Activated B cell treated with CpG ODN at 0.5 μM for 24 hours (primary cell): ENCODE measurements at regions of chr18 and their contacts with region 1.

Region 1: GRCh38 chr18:36129300-36130038 is at the starts of genes ELP2 and SLC39A6:
- DNase-seq: peak; percentile 97
- ATAC-seq: peak; percentile 87
- H3K4me3 Mint-ChIP-seq: peak within 1 kb of the TSS; percentile 94
- H3K27ac Mint-ChIP-seq: peak within 1 kb of the TSS; percentile 92
- H3K4me1 Mint-ChIP-seq: peaks cover 57% of the 10 kb centered on the region
- H3K27me3 Mint-ChIP-seq: no peaks in the 10 kb centered on the region
- CTCF ChIP-seq: no peak
- total RNA-seq, gene ELP2: 105 and 124 TPM in 2 replicates
- total RNA-seq, gene SLC39A6: 17.6 and 18.6 TPM in 2 replicates

Region 2: DNA sequence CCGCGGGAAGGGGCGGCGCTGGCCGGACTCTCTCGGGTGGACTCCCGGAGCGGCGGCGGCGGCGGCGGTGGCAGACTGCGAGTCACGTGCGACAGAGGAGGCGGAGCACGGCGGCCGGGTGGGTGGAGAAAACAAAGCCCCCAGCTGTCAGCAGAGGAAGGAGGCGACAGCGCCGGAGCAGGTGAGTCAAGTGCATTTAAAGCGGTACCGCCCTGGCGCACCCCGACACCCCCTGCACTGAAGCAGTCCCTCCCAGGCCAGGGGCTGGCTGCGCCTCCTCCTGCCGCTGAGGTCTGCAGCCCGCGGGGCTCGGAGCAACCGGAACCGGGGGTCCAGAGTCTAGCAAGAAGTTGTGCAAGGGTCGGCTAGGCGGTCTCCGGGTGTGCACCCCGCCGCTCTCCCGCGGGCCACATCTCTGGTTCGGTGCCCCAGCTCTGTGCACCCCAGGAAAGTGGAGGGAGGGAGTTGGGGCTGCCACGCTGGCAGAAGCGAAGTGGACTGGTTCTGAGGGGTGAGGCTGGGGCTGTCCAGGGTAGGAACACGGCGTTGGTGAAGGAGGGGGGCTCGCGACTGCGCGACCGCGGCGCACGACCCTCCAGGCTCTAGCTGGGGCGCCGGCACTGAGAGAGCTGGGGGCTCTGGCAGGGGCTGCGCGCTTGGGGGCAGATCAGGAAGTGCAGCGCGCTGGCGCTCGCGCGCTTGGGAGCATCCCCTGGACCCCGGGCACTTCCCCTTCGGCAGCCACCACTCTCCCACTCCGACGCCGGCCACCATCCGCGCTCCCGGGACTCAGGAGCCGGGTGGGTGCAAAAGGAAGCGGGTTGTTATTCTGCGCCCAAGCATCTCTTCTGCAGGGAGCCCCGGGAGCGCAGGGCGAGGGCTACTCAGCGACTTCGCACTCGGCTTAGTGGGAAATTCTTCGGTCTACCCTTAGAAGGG is 1152.3 kb before region 1 on chr18:
- CTCF ChIA-PET with region 1: no interaction called
- POLR2A ChIA-PET with region 1: no interaction called
- intact Hi-C with region 1: loop called (anchors 5 kb)
- DNase-seq: peak; percentile 77
- ATAC-seq: peak; percentile 76
- H3K4me3 Mint-ChIP-seq: peak overlapping the region; percentile 89
- H3K27ac Mint-ChIP-seq: no peak overlapping the region
- H3K4me1 Mint-ChIP-seq: peaks cover 23% of the 10 kb centered on the region
- H3K27me3 Mint-ChIP-seq: peaks cover 18% of the 10 kb centered on the region
- CTCF ChIP-seq: no peak

Region 3: GRCh38 chr18:35267161-35267651 is 862.3 kb before region 1 on chr18:
- CTCF ChIA-PET with region 1: no interaction called
- POLR2A ChIA-PET with region 1: no interaction called
- intact Hi-C with region 1: loop called (anchors 1 kb)
- DNase-seq: peak; percentile 72
- ATAC-seq: peak; percentile 89
- H3K4me3 Mint-ChIP-seq: peak overlapping the region; percentile 94
- H3K27ac Mint-ChIP-seq: peak overlapping the region; percentile 93
- H3K4me1 Mint-ChIP-seq: peaks cover 26% of the 10 kb centered on the region
- H3K27me3 Mint-ChIP-seq: no peaks in the 10 kb centered on the region
- CTCF ChIP-seq: no peak

Region 4: GRCh38 chr18:35376742-35377695 is 752.5 kb before region 1 on chr18 and contains the start of gene ZNF396:
- CTCF ChIA-PET with region 1: no interaction called
- POLR2A ChIA-PET with region 1: no interaction called
- intact Hi-C with region 1: loop called (anchors 1 kb)
- DNase-seq: peak; percentile 68
- ATAC-seq: peak; percentile 72
- H3K4me3 Mint-ChIP-seq: peak within 1 kb of the TSS; percentile 89
- H3K27ac Mint-ChIP-seq: peak within 1 kb of the TSS; percentile 47
- H3K4me1 Mint-ChIP-seq: peaks cover 11% of the 10 kb centered on the region
- H3K27me3 Mint-ChIP-seq: no peaks in the 10 kb centered on the region
- CTCF ChIP-seq: no peak
- total RNA-seq, gene ZNF396: 1.5 and 2.2 TPM in 2 replicates

Region 5: GRCh38 chr18:35504996-35505395 is 624.5 kb before region 1 on chr18:
- CTCF ChIA-PET with region 1: no interaction called
- POLR2A ChIA-PET with region 1: no interaction called
- intact Hi-C with region 1: no loop called
- DNase-seq: no peak
- ATAC-seq: no peak
- H3K4me3 Mint-ChIP-seq: no peak overlapping the region
- H3K27ac Mint-ChIP-seq: no peak overlapping the region
- H3K4me1 Mint-ChIP-seq: peaks cover 10% of the 10 kb centered on the region
- H3K27me3 Mint-ChIP-seq: no peaks in the 10 kb centered on the region
- CTCF ChIP-seq: no peak

Region 6: DNA sequence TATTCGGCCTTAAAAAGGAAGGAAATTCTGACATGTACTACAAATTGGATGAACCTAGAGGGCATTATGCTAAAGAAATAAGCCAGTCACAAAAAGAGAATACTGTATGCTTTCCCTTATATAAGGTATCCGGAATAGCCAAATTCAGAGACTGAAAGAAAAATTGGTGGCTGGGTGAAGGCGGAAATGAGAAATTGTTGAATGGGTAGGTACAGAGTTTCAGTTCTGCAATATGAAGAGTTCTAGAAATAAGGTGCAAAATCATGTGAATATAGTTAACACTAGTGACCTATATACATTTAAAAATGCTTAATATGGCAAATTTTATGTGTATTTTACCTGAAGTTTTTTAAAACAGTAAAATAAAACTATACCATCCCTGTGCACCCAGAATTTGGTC is 113.8 kb before region 1 on chr18:
- CTCF ChIA-PET with region 1: interaction called, 6 read pairs
- POLR2A ChIA-PET with region 1: interaction called, 6 read pairs
- intact Hi-C with region 1: loop called (anchors 1 kb)
- DNase-seq: no peak
- ATAC-seq: peak; percentile 75
- H3K4me3 Mint-ChIP-seq: no peak overlapping the region
- H3K27ac Mint-ChIP-seq: peak overlapping the region; percentile 12
- H3K4me1 Mint-ChIP-seq: peaks cover 26% of the 10 kb centered on the region
- H3K27me3 Mint-ChIP-seq: no peaks in the 10 kb centered on the region
- CTCF ChIP-seq: no peak

Region 7: DNA sequence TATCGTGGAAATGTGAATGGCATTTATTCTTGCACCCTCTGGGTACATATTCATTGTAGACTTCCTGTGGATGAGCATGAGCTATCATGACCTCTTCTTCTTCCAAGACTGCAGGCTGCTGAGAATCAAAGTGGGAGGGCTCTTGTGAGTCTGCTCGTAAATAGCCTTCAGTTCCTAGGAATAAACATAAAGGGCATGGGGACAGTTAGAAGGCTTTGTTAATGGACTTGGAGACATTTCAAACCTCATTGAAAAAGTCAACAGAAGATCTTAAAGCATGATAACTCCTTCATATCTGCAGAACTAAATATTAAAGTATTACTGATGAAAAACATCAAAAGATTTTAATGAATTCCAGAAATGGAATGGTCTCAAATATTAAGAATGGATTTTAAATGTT is 15.2 kb before region 1 on chr18:
- CTCF ChIA-PET with region 1: no interaction called
- POLR2A ChIA-PET with region 1: no interaction called
- intact Hi-C with region 1: no loop called
- DNase-seq: no peak
- ATAC-seq: no peak
- H3K4me3 Mint-ChIP-seq: no peak overlapping the region
- H3K27ac Mint-ChIP-seq: no peak overlapping the region
- H3K4me1 Mint-ChIP-seq: no peaks in the 10 kb centered on the region
- H3K27me3 Mint-ChIP-seq: no peaks in the 10 kb centered on the region
- CTCF ChIP-seq: no peak

Region 8: DNA sequence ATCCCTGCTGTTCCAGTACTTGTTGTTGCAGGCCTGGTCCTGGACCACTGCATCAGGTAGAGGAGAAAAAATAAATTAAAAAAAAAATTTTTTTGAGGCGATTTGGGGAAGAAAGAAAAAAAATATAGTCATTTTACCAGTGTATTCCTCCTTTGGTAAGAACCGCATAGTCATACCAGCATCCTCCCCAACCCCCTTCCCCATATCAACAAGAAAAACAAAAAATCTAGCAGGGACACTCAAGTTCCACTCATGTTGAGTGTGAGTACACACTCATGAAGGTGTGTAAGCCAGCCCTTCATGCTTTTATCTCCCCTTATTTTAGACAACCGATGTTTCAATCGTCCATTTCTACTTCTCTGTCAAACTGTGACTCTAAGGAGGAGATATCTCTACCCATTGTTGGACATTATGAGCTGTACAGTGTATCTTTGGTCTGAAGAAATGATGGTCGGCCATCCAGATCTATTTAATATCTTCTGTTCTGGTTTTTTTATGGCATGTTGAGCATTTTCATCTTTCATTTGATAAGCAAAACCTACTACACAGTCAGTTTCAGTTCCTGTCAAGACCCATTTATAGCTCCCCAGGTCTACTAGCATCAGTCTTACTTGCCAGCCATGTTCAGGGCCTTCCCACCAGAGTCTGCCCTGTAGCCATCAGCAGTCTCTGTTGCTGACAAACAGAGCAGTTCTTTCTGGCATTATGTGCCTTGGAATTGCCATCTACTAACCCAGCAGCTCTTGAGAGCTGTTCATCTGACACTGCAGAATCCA is 20.2 kb after region 1 on chr18:
- CTCF ChIA-PET with region 1: no interaction called
- POLR2A ChIA-PET with region 1: interaction called, 29 read pairs
- intact Hi-C with region 1: loop called (anchors 1 kb)
- DNase-seq: no peak
- ATAC-seq: peak; percentile 98
- H3K4me3 Mint-ChIP-seq: peak overlapping the region; percentile 61
- H3K27ac Mint-ChIP-seq: peak overlapping the region; percentile 89
- H3K4me1 Mint-ChIP-seq: peaks cover 54% of the 10 kb centered on the region
- H3K27me3 Mint-ChIP-seq: no peaks in the 10 kb centered on the region
- CTCF ChIP-seq: no peak

Region 9: GRCh38 chr18:36179562-36180355 is 50.3 kb after region 1 on chr18:
- CTCF ChIA-PET with region 1: no interaction called
- POLR2A ChIA-PET with region 1: no interaction called
- intact Hi-C with region 1: no loop called
- DNase-seq: no peak
- ATAC-seq: no peak
- H3K4me3 Mint-ChIP-seq: no peak overlapping the region
- H3K27ac Mint-ChIP-seq: peak overlapping the region; percentile 69
- H3K4me1 Mint-ChIP-seq: peaks cover 18% of the 10 kb centered on the region
- H3K27me3 Mint-ChIP-seq: no peaks in the 10 kb centered on the region
- CTCF ChIP-seq: no peak

Region 10: DNA sequence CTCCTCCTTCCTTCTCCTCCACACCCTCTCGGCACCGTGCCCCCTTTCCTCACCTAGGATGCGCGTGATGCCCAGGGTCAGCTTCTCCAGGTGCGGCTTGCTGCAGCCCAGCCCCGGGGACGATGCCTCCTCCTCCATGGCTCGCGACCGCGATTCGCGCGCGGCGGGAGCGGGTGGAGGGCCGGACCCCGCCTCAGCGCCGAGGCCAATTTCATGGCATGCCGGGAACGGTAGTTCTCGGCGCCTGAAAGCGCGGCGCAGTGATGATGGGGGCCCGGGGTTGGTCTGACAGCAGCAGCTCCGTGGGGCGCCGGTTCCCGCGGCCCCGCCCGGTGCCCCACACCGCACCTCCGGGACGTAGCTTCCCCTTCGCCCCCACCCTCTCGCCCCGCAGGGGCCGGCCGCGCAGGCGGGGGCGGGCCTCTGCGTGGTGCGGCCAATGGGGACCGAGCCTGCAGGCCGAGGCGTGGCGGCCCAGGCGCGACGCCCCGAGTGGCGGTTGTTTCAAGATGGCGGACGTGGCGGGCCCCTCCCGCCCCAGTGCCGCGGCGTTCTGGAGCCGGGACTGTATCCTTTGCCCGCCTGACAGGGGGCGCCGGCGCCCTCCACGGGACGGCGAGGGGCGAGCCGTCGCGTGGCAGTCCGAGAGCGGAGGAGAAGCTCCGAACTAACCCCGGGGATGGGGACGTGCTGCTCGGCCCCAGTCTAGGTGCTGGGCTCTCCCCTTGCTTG is 699.3 kb after region 1 on chr18 and contains the starts of genes KIAA1328 and TPGS2:
- CTCF ChIA-PET with region 1: no interaction called
- POLR2A ChIA-PET with region 1: no interaction called
- intact Hi-C with region 1: loop called (anchors 1 kb)
- DNase-seq: peak; percentile 88
- ATAC-seq: peak; percentile 91
- H3K4me3 Mint-ChIP-seq: peak within 1 kb of the TSS; percentile 94
- H3K27ac Mint-ChIP-seq: peak within 1 kb of the TSS; percentile 84
- H3K4me1 Mint-ChIP-seq: peaks cover 31% of the 10 kb centered on the region
- H3K27me3 Mint-ChIP-seq: no peaks in the 10 kb centered on the region
- CTCF ChIP-seq: no peak
- total RNA-seq, gene KIAA1328: 11.7 and 12.9 TPM in 2 replicates
- total RNA-seq, gene TPGS2: 42.1 and 45.1 TPM in 2 replicates